Activated T-helper 1 cell treated with anti-CD3 and anti-CD28 coated beads, Interleukin-12 subunit alpha, Interleukin-12 subunit beta, Interleukin-2, Interleukin-4 antibody, amounts not matched to agents 30 ng/mL and 10 ng/mL and 1 ng/mL, durations not matched to agents 14 hours and 24 hours and 36 hours (primary cell): ENCODE measurements at regions of chr20 and their contacts with region 1.

Region 1: DNA sequence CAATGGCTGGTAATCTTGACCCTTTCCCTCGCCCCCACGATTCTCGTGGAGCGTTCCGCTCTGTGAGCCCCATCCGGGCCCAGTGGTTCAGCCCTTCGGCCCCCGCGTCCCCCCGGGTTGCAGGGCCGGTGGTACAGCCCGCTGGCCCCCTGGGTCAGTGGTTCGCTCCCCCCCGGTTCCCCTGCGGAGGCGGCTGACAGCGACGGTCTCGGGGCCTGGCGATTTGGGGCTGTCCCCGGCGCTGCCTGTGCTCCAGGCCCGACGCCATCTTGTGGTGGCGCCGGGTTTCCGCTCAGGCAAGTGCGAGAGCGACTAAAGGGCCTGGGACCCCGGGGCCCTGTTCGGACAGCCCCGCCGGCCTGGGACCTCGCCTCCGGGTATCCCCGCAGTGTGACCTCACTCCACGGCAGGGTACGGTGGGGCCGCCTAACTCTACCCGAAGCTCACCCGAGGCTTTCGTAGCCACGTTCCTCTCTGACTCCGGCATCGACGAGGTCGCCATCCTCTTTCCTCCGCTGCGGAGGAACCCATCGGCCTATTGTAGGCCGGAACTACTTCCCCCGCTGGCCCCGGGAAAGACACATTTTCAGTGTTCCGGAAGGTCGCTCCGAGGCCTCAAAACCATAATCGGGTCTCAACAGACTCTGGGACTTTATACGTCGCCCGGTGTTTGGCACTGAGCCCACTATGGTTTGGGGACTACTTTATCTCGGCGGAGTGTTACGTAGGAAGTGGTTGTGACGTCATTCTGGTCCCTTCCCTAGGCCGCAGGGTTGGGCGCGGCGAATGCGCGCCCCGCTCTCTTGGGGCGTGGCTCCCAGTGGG is at the start of gene ZNF335:
- DNase-seq: peak; percentile 94
- H3K4me3 Mint-ChIP-seq: peak within 1 kb of the TSS; percentile 89
- H3K27ac Mint-ChIP-seq: peak within 1 kb of the TSS; percentile 100
- H3K4me1 Mint-ChIP-seq: peaks cover 23% of the 10 kb centered on the region
- H3K27me3 Mint-ChIP-seq: no peaks in the 10 kb centered on the region
- total RNA-seq, gene ZNF335: 38.3 and 40.9 TPM in 2 replicates

Region 2: DNA sequence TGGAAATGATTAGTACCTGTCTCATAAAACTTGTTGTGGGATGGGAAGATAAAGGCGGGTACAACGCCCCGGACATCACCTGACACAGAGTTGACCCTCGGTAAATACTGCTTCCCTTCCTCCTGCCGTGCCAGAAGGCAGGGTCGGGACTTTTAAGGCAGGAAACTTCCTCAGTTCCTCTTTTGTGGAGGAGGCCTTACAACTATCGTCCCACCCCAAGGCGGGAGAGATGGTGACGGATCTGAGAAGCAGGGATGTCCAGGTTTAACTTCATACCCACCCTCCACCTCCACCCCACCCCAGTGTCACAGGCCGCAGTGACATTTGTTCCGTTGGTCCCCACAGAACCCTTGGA is 179.6 kb before region 1 on chr20:
- intact Hi-C with region 1: loop called (anchors 2 kb)
- DNase-seq: no peak
- H3K4me3 Mint-ChIP-seq: peak overlapping the region; percentile 82
- H3K27ac Mint-ChIP-seq: peak overlapping the region; percentile 89
- H3K4me1 Mint-ChIP-seq: peaks cover 24% of the 10 kb centered on the region
- H3K27me3 Mint-ChIP-seq: peaks cover 3% of the 10 kb centered on the region

Region 3: GRCh38 chr20:45857114-45857881 is 114.6 kb before region 1 on chr20 and contains the starts of genes ACOT8 and ZSWIM3:
- intact Hi-C with region 1: loop called (anchors 1 kb)
- DNase-seq: peak; percentile 95
- H3K4me3 Mint-ChIP-seq: peak within 1 kb of the TSS; percentile 97
- H3K27ac Mint-ChIP-seq: peak within 1 kb of the TSS; percentile 98
- H3K4me1 Mint-ChIP-seq: peaks cover 33% of the 10 kb centered on the region
- H3K27me3 Mint-ChIP-seq: no peaks in the 10 kb centered on the region
- total RNA-seq, gene ACOT8: 26.5 and 27.2 TPM in 2 replicates
- total RNA-seq, gene ZSWIM3: 5.8 and 6.2 TPM in 2 replicates

Region 4: GRCh38 chr20:45934586-45935415 is 37.1 kb before region 1 on chr20 and contains the start of gene PCIF1:
- intact Hi-C with region 1: loop called (anchors 1 kb)
- DNase-seq: peak; percentile 96
- H3K4me3 Mint-ChIP-seq: peak within 1 kb of the TSS; percentile 99
- H3K27ac Mint-ChIP-seq: peak within 1 kb of the TSS; percentile 98
- H3K4me1 Mint-ChIP-seq: peaks cover 23% of the 10 kb centered on the region
- H3K27me3 Mint-ChIP-seq: no peaks in the 10 kb centered on the region
- total RNA-seq, gene PCIF1: 27.9 and 28.5 TPM in 2 replicates

Region 5: DNA sequence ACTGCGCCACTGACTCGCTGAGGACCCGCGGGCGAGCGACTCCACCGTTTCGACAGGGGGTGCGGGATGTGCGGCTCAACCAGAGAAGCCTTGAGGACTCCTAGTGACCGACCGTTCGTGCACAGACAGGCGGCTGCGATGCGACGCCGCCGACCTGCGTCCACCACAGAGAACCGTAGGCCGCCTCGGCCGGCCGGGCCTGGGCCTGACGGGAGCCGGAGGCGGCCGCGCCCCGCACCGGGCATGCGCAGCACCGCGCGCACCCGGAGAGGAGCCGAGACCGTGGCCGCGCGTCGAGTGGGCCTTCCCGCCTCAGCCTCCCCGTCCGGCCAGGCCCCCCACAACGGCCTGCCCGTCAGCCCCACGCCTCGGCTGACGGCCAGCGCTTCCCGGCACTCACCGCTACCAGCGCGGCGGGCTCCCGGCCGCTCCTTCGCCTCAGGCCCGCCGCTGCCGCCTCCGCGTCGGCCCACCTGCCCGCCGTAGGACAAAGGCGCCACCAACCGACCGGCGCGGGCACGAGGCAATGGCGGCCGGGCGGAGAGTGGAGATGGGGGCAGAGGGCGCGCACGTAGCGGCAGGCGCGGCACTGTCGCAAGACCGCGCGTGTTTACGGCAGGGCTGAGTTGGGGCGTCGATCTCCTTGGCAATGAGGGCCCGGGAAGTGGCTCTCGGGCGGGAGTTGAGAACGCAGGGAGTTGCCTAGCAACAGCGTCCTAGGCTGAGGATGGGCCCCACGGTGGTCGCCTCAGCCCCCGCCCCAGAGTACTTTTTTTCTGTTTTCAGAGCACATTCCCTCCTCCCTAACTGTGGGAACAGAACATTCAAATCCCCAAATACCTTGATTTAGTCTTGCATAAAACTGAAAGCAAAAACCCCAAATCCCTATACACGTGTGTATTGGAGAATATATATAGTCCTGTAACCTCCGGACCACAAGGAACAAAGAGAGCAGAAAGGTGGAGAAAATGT is 117.8 kb after region 1 on chr20 and contains the start of gene NCOA5:
- intact Hi-C with region 1: loop called (anchors 1 kb)
- DNase-seq: peak; percentile 91
- H3K4me3 Mint-ChIP-seq: peak within 1 kb of the TSS; percentile 92
- H3K27ac Mint-ChIP-seq: peak within 1 kb of the TSS; percentile 94
- H3K4me1 Mint-ChIP-seq: peaks cover 48% of the 10 kb centered on the region
- H3K27me3 Mint-ChIP-seq: peaks cover 4% of the 10 kb centered on the region
- total RNA-seq, gene NCOA5: 30.4 and 32.9 TPM in 2 replicates

Region 6: GRCh38 chr20:46283426-46284039 is 311.6 kb after region 1 on chr20:
- intact Hi-C with region 1: no loop called
- DNase-seq: no peak
- H3K4me3 Mint-ChIP-seq: no peak overlapping the region
- H3K27ac Mint-ChIP-seq: no peak overlapping the region
- H3K4me1 Mint-ChIP-seq: no peaks in the 10 kb centered on the region
- H3K27me3 Mint-ChIP-seq: peaks cover 2% of the 10 kb centered on the region